HCT116 (cell line): ENCODE measurements at regions of chr12 and their contacts with region 1.

Region 1: GRCh38 chr12:7859552-7859951 is 13.2 kb downstream of the SLC2A14 start:
- DNase-seq: no peak
- ATAC-seq: no peak
- H3K4me3 ChIP-seq: no peak overlapping the region
- H3K27ac ChIP-seq: no peak overlapping the region
- H3K4me1 ChIP-seq: peaks cover 0 to 16% of the 10 kb centered on the region in 2 experiments; a peak in 2 of 4 replicates
- H3K27me3 ChIP-seq: no peaks in the 10 kb centered on the region
- CTCF ChIP-seq: no peak
- POLR2A ChIP-seq: no peak
- RAD21 ChIP-seq: no peak

Region 2: GRCh38 chr12:7995266-7995963 is 135.9 kb after region 1 on chr12:
- CTCF ChIA-PET with region 1: interaction called, 10 read pairs
- POLR2A ChIA-PET with region 1: no interaction called
- RAD21 ChIA-PET with region 1: interaction called in 1 of 2 experiments, 6 read pairs
- intact Hi-C with region 1: loop called (anchors 2 kb)
- DNase-seq: peak; percentile 64
- ATAC-seq: peak; percentile 99
- H3K4me3 ChIP-seq: no peak overlapping the region
- H3K27ac ChIP-seq: no peak overlapping the region
- H3K4me1 ChIP-seq: peaks cover 0 to 12% of the 10 kb centered on the region in 2 experiments; a peak in 2 of 4 replicates
- H3K27me3 ChIP-seq: no peaks in the 10 kb centered on the region
- CTCF ChIP-seq: peak; percentile 73 to 92 (median 85)
- POLR2A ChIP-seq: no peak
- RAD21 ChIP-seq: peak; percentile 88

Region 3: DNA sequence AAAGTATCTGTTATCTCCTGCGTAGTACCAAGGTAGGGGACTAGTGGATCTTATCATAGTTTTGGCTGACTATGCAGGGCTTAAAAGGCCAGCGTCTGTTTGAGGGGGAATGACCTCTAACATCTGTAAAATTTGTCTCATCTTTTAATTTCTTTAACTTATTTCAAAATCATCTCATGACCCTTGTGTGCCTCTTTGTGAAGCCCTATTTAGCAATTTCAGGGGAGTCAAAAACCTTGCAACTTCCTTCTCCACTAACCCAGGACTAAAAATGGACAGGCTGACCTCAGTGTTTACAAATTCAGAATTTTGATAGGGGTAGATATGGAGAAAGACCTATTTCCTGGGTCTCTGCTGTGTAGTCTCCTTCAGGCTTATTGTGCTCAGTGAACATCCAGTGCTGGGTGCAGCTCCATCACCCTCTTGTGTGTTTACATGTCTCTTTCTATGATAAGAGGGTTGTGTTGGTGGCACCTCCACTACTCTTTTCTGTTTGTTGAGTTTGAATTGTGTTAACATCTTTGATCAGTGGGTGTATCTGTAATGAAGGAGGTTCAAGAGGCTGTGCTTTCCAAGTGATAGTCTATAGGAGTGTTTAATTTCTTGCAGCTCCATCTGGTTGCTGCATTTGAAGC is 236.8 kb after region 1 on chr12:
- CTCF ChIA-PET with region 1: no interaction called
- POLR2A ChIA-PET with region 1: no interaction called
- RAD21 ChIA-PET with region 1: no interaction called
- intact Hi-C with region 1: no loop called
- DNase-seq: no peak
- ATAC-seq: no peak
- H3K4me3 ChIP-seq: no peak overlapping the region
- H3K27ac ChIP-seq: no peak overlapping the region
- H3K4me1 ChIP-seq: no peaks in the 10 kb centered on the region
- H3K27me3 ChIP-seq: no peaks in the 10 kb centered on the region
- CTCF ChIP-seq: no peak
- POLR2A ChIP-seq: no peak
- RAD21 ChIP-seq: no peak